ENCODE measurements at regions of chr1 and their contacts with region 1.

Region 1: DNA sequence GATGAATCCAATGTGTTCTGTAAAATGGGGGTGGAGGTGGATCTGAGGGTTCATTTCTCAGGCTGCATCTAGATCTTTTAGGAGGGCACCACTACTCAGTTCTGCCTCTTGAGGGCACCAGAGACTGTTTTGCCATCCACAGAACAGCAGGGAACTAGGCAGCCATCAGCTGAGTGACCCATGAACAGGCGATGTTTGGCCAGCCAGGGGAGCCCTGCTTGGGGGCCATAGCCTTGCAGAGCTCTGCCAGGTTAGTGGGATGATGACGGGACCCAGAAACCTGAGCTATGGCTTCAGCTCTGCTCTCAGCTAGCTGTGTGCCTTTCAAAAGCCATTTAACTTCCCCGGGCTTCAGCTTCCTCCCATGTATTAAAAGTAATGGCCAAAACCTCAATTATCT is 13.4 kb upstream of the NOS1AP start:
- DNase-seq: peak; percentile 59 to 73
- ATAC-seq: peak; percentile 88
- H3K4me3 ChIP-seq: no peak overlapping the region
- H3K27ac ChIP-seq: no peak overlapping the region
- H3K4me1 ChIP-seq: no peaks in the 10 kb centered on the region
- H3K27me3 ChIP-seq: peaks cover 0 to 1% of the 10 kb centered on the region in 2 donors

Region 2: DNA sequence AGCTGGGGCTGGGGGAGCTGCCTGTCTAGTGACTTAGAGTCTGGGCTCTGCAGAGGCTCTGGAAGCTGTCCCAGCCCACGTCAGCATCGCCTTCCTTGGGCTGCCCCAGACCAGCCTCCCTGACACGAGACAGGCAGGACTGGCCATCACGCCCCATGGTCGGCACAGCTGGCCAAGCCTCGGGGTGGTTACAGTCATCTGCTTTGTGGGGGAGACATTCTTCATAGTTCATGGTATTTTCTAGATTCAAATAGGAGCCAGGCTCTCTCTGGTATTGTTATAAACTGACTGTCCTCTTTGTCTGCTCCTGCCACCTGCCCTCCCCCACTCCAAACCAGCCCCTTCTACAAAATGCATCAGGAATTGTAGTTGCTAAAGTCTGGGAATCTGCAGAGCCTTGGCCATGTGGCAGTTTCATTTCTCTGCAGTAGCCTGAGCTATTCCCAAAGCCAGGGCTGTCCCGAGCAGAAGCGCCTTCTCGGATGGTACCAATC is 61.8 kb before region 1 on chr1:
- intact Hi-C with region 1: no loop called
- DNase-seq: peak; percentile 79 to 84
- ATAC-seq: peak; percentile 53
- H3K4me3 ChIP-seq: no peak overlapping the region
- H3K27ac ChIP-seq: no peak overlapping the region
- H3K4me1 ChIP-seq: no peaks in the 10 kb centered on the region
- H3K27me3 ChIP-seq: no peaks in the 10 kb centered on the region

Region 3: DNA sequence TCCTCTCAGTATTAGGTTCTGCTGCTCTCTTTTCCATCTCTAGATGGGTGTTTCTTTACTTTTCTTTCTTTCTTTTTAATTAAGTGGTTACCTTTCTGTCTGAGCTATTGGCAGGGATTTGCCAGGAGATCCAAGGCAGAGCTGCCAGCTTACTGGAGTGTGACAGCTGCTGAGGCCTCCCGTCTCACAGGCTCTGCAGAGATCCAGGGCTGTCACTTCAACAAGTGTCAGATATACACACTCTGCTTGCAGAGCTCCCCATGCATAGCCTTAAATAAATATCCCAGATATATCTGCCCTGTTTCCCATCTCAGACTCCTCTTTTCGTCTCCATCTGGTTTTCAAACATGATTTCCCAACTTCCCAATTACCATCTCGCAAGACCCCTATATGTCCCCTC is 137.8 kb after region 1 on chr1:
- intact Hi-C with region 1: no loop called
- DNase-seq: no peak
- ATAC-seq: no peak
- H3K4me3 ChIP-seq: no peak overlapping the region
- H3K27ac ChIP-seq: no peak overlapping the region
- H3K4me1 ChIP-seq: peaks cover 0 to 4% of the 10 kb centered on the region in 2 donors
- H3K27me3 ChIP-seq: no peaks in the 10 kb centered on the region

Region 4: GRCh38 chr1:162276493-162276892 is 220.4 kb after region 1 on chr1:
- intact Hi-C with region 1: loop called (anchors 2 to 5 kb)
- DNase-seq: no peak
- ATAC-seq: no peak
- H3K4me3 ChIP-seq: no peak overlapping the region
- H3K27ac ChIP-seq: no peak overlapping the region
- H3K4me1 ChIP-seq: no peaks in the 10 kb centered on the region
- H3K27me3 ChIP-seq: no peaks in the 10 kb centered on the region

Region 5: DNA sequence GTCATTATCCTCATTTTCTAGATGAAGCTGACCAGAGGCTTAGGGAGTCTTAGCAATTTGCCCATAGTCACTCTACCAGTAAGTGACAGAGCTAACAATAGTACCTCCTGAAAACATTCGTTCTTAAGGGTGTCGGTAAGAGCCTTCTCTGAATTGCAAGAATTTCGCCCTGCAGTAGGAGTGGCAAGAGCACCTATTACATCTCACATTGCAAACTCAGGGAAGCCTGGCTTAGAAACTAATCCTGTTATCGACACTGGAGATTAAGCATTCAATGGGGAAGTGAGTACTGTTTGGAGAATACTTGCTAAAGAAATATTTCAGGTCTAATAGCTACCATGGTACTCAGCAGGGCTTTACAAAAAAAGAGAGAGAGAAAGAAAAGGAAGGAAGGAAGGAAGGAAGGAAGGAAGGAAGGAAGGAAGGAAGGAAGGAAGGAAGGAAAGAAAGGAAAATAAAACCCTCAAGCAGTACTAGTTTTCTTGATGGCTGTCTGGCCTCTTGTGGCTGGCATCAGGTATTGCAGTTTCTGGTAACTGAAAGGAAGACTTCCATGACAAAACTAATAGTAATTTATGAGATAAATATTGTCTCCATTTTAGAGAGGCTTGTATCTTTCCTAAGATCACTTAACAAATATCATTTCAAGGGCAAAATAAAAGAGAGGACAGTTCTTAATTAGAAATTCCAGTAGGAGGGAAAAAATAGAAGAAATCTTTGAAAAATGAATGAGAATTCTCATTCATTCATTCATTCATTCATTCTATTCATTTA is 335.9 kb after region 1 on chr1:
- intact Hi-C with region 1: loop called (anchors 1 to 5 kb)
- DNase-seq: no peak
- ATAC-seq: no peak
- H3K4me3 ChIP-seq: no peak overlapping the region
- H3K27ac ChIP-seq: no peak overlapping the region
- H3K4me1 ChIP-seq: no peaks in the 10 kb centered on the region
- H3K27me3 ChIP-seq: no peaks in the 10 kb centered on the region